ENCODE measurements at regions of chr17 and their contacts with region 1.

Region 1: GRCh38 chr17:32461853-32462617 is 17.7 kb downstream of the PSMD11 start:
- DNase-seq: no peak
- ATAC-seq: peak; percentile 74
- H3K4me3 Mint-ChIP-seq: no peak overlapping the region
- H3K27ac Mint-ChIP-seq: peak overlapping the region; percentile 30
- H3K4me1 Mint-ChIP-seq: peaks cover 13% of the 10 kb centered on the region
- H3K27me3 Mint-ChIP-seq: no peaks in the 10 kb centered on the region
- CTCF ChIP-seq: no peak

Region 2: GRCh38 chr17:32253117-32253611 is 208.9 kb before region 1 on chr17:
- CTCF ChIA-PET with region 1: interaction called, 5 read pairs
- POLR2A ChIA-PET with region 1: no interaction called
- intact Hi-C with region 1: loop called (anchors 1 kb)
- DNase-seq: peak; percentile 58
- ATAC-seq: peak; percentile 99
- H3K4me3 Mint-ChIP-seq: no peak overlapping the region
- H3K27ac Mint-ChIP-seq: no peak overlapping the region
- H3K4me1 Mint-ChIP-seq: peaks cover 4% of the 10 kb centered on the region
- H3K27me3 Mint-ChIP-seq: peaks cover 10% of the 10 kb centered on the region
- CTCF ChIP-seq: peak; percentile 32

Region 3: DNA sequence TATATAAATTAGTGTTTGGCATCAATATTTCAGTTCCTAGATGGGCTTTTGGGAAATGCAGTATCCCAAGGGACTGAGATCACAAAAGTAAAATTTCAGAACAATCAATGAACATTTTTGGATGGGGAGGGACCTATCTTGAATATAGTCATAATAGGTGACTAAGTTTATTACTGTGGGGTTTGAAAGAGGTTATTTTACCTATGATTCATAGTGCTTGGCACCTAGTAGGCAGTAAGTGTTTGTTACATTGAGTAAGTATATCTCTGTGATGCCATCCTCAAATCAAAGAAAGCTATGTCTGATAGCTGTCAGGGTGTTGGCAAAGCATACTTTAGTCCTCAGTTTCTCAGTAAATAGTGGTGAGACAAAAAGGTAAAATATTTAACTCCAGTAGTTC is 75.2 kb before region 1 on chr17:
- CTCF ChIA-PET with region 1: no interaction called
- POLR2A ChIA-PET with region 1: no interaction called
- intact Hi-C with region 1: no loop called
- DNase-seq: no peak
- ATAC-seq: no peak
- H3K4me3 Mint-ChIP-seq: no peak overlapping the region
- H3K27ac Mint-ChIP-seq: no peak overlapping the region
- H3K4me1 Mint-ChIP-seq: no peaks in the 10 kb centered on the region
- H3K27me3 Mint-ChIP-seq: no peaks in the 10 kb centered on the region
- CTCF ChIP-seq: no peak

Region 4: DNA sequence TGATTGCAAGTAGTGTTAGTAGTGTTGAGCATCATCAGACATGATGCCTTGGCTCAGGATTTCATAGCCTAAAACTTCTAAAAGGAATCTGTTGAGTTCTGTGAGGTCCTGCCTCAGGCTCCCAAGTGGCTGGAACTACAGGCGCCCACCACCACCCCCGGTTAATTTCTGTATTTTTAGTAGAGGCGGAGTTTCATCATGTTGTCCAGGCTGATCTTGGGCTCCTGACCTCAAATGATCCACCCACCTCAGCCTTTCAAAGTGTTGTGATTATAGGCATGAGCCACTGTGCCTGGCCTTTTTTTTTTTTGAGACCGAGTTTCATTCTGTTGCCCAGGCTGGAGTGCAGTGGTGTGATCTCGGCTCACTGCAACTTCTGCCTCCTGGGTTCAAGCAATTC is 12.1 kb before region 1 on chr17:
- CTCF ChIA-PET with region 1: interaction called, 21 read pairs
- POLR2A ChIA-PET with region 1: interaction called, 18 read pairs
- intact Hi-C with region 1: no loop called
- DNase-seq: no peak
- ATAC-seq: no peak
- H3K4me3 Mint-ChIP-seq: no peak overlapping the region
- H3K27ac Mint-ChIP-seq: no peak overlapping the region
- H3K4me1 Mint-ChIP-seq: peaks cover 26% of the 10 kb centered on the region
- H3K27me3 Mint-ChIP-seq: no peaks in the 10 kb centered on the region
- CTCF ChIP-seq: no peak

Region 5: GRCh38 chr17:32609085-32609484 is 147.1 kb after region 1 on chr17:
- CTCF ChIA-PET with region 1: interaction called, 22 read pairs
- POLR2A ChIA-PET with region 1: no interaction called
- intact Hi-C with region 1: loop called (anchors 1 kb)
- DNase-seq: peak; percentile 52
- ATAC-seq: peak; percentile 100
- H3K4me3 Mint-ChIP-seq: no peak overlapping the region
- H3K27ac Mint-ChIP-seq: no peak overlapping the region
- H3K4me1 Mint-ChIP-seq: peaks cover 8% of the 10 kb centered on the region
- H3K27me3 Mint-ChIP-seq: no peaks in the 10 kb centered on the region
- CTCF ChIP-seq: no peak

Region 6: DNA sequence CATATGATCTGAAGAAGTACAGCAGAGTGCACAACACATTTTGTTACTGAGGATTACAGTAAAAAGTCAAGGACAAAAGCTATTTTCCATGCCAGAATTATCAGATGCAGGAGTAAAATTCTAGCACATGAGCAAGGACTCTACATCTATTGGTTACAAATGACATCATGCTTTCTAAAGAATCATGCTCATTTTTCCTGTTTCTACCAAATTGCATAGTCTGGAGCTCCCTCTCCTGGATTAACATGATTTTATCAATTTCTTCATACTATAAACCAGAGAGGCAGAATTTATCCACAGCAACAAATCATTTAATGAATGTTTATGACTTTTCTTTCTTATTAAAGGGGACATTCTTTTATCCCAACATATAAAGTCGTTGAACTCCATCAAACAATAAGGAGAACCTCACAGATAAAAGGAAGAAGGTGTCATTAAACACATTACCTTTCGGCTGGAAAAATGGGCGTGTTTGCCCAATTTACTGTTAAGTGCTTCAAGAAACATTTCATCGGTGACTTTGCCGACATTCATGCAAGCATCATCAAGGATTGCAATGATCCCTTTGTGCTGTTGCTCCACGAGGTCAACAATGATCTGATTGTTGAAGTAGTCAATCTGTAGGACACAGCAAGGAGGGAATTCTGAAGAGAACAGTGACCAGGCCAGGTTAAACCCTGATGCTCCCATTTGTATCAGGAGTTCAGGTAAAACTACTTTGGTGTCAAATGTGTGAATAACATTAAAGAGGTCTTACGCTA is 293.2 kb after region 1 on chr17:
- CTCF ChIA-PET with region 1: interaction called, 19 read pairs
- POLR2A ChIA-PET with region 1: no interaction called
- intact Hi-C with region 1: loop called (anchors 1 kb)
- DNase-seq: no peak
- ATAC-seq: peak; percentile 69
- H3K4me3 Mint-ChIP-seq: no peak overlapping the region
- H3K27ac Mint-ChIP-seq: no peak overlapping the region
- H3K4me1 Mint-ChIP-seq: no peaks in the 10 kb centered on the region
- H3K27me3 Mint-ChIP-seq: no peaks in the 10 kb centered on the region
- CTCF ChIP-seq: no peak

Measured in activated B cell treated with CpG ODN at 0.5 μM for 24 hours (primary cell).